ENCODE measurements at regions of chr17 and their contacts with region 1.

Region 1: DNA sequence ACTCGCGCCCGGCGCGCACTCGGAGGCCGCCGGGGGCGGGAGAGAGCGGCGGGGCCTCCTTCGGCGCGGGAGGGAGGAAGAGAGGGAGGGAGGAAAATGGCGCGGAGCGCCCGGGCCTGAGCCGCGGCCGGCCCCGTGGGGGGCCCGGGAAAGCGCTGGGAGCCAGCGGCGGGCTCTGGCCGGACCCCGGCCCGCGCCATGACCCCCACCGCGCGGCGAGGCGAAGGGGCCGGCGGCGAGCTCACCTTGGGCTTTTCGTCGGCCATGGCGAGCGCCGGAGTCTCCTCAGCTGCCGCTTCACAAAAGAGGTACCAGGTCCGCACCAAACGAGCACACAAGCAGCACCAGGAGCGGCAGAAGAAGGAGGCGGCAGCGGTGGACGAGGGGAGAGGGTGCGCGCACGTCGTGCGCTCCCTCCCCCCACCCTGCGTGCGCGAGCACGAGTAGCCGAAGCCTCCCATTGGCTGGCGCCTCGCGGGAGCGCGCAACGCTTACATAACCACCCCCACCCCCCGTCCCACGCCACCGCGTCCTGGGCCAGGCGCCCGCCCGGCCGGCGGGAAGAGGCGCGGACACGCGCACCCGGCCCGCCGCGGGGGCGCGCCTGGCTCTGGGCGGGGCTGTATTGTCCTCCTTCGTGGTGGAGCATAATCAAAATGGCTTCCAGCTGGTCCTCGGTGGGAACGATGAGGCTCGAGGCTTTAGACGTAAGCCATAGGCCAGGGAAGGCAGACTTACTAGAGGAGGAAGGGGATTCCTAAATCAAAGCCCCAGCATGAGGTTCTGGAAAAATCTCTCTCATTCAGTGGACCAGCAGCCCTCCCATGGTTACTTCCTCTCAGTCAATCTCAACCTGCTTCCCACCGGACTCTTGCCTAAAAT is at the start of gene SUMO2:
- DNase-seq: peak; percentile 84
- ATAC-seq: peak; percentile 84
- H3K4me3 ChIP-seq: peak within 1 kb of the TSS; percentile 92 to 98 (median 96)
- H3K27ac ChIP-seq: peak within 1 kb of the TSS; percentile 96
- H3K4me1 ChIP-seq: peaks cover 47% of the 10 kb centered on the region
- H3K27me3 ChIP-seq: no peaks in the 10 kb centered on the region; a peak in 1 of 5 replicates
- CTCF ChIP-seq: peak; percentile 12; the same call in 1 of the 2 replicates
- EP300 ChIP-seq: peak in 1 of 2 experiments; percentile 44; a peak in 3 of 4 replicates
- POLR2A ChIP-seq: peak; percentile 76 to 82
- RAD21 ChIP-seq: peak; percentile 61; the same call in 1 of the 2 replicates
- total RNA-seq, gene SUMO2: 553 and 842 TPM in 2 replicates

Region 2: GRCh38 chr17:75199886-75200618 is 17.2 kb after region 1 on chr17:
- CTCF ChIA-PET with region 1: no interaction called
- POLR2A ChIA-PET with region 1: interaction called, 11 read pairs
- in situ Hi-C with region 1: no loop called
- intact Hi-C with region 1: no loop called
- DNase-seq: peak; percentile 53
- ATAC-seq: peak; percentile 30
- H3K4me3 ChIP-seq: peak overlapping the region in 1 of 3 experiments; percentile 59; a peak in 2 of 6 replicates
- H3K27ac ChIP-seq: peak overlapping the region; percentile 62
- H3K4me1 ChIP-seq: peaks cover 43% of the 10 kb centered on the region
- H3K27me3 ChIP-seq: no peaks in the 10 kb centered on the region
- CTCF ChIP-seq: no peak
- EP300 ChIP-seq: peak in 1 of 2 experiments; percentile 81; a peak in 1 of 4 replicates
- POLR2A ChIP-seq: no peak
- RAD21 ChIP-seq: no peak